ENCODE measurements at regions of chr19 and their contacts with region 1.

Region 1: GRCh38 chr19:7348587-7349230 is at the start of gene ARHGEF18:
- DNase-seq: no peak
- ATAC-seq: no peak
- H3K4me3 ChIP-seq: no peak within 1 kb of the TSS
- H3K27ac ChIP-seq: no peak within 1 kb of the TSS
- H3K4me1 ChIP-seq: 0 out of 2 replicates have a peak, but pooled peaks cover 7% of the 10 kb centered on the region
- H3K27me3 ChIP-seq: peaks cover 6% of the 10 kb centered on the region; the same call in 1 of the 2 replicates
- CTCF ChIP-seq: no peak
- total RNA-seq, gene ARHGEF18: 65.1 and 66.8 TPM in 2 replicates

Region 2: GRCh38 chr19:7293795-7294570 is 54.7 kb before region 1 on chr19 and contains the start of gene INSR:
- CTCF ChIA-PET with region 1: no interaction called
- POLR2A ChIA-PET with region 1: interaction called, 24 read pairs
- intact Hi-C with region 1: no loop called
- DNase-seq: peak; percentile 94
- ATAC-seq: peak; percentile 91
- H3K4me3 ChIP-seq: peak within 1 kb of the TSS; percentile 70
- H3K27ac ChIP-seq: no peak within 1 kb of the TSS
- H3K4me1 ChIP-seq: peaks cover 16% of the 10 kb centered on the region
- H3K27me3 ChIP-seq: peaks cover 6% of the 10 kb centered on the region; the same call in 1 of the 2 replicates
- CTCF ChIP-seq: no peak
- total RNA-seq, gene INSR: 13.7 and 41.5 TPM in 2 replicates

Region 3: DNA sequence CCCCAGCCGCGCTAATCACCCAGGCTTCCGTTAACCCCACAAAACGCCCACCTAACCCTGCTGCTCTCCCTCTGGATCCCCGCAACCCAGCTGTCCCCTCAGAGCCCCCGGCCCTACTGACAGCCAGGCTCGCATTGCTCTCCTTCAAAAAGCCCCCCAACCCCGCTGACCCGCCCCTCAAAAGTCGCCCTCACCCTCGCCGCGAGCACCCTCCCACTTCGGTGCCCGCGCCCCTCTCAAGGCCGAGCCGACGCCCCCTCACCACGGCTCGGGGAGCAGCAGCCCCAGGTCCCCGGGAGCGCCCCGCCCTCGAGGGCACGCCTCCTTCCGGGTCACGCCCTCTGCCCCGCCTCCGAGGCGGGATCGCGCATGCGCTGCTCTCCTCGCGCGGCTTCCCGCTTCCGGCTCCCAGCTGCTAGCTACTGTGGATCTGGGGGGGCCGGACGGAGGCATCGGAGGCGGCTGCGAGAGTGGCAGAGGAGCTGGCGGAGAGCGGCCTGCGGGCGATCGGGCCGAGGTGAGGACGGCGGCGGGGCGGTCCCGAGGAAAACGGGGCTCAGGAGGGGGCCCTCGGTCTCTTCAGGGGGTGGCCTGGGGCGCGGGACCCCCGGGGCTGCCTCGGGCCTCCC is 46.1 kb after region 1 on chr19:
- CTCF ChIA-PET with region 1: no interaction called
- POLR2A ChIA-PET with region 1: no interaction called
- intact Hi-C with region 1: loop called (anchors 5 kb)
- DNase-seq: peak; percentile 96
- ATAC-seq: peak; percentile 35
- H3K4me3 ChIP-seq: peak overlapping the region; percentile 84
- H3K27ac ChIP-seq: peak overlapping the region; percentile 13
- H3K4me1 ChIP-seq: peaks cover 54% of the 10 kb centered on the region
- H3K27me3 ChIP-seq: no peaks in the 10 kb centered on the region
- CTCF ChIP-seq: 0 out of 2 replicates have a peak, but pooled peaks have one; percentile 18

Measured in PC-3 (cell line).